Ovary (tissue), 10 donors: ENCODE measurements at regions of chr7 and their contacts with region 1.

Region 1: GRCh38 chr7:148962823-148963582 is 65.3 kb downstream of the PDIA4 start:
- DNase-seq: peak; percentile 63 to 75 (median 67)
- H3K4me3 ChIP-seq: peak overlapping the region; percentile 44
- H3K27ac ChIP-seq: peak overlapping the region; percentile 14 to 65
- H3K4me1 ChIP-seq: peaks cover 3% of the 10 kb centered on the region
- H3K27me3 ChIP-seq: no peaks in the 10 kb centered on the region
- CTCF ChIP-seq: peak; percentile 28 to 44 (median 34)
- EP300 ChIP-seq: no peak
- POLR2A ChIP-seq: no peak

Region 2: GRCh38 chr7:148503875-148504487 is 459.0 kb before region 1 on chr7:
- intact Hi-C with region 1: loop called (anchors 5 to 10 kb)
- DNase-seq: no peak
- H3K4me3 ChIP-seq: no peak overlapping the region
- H3K27ac ChIP-seq: no peak overlapping the region
- H3K4me1 ChIP-seq: no peaks in the 10 kb centered on the region
- H3K27me3 ChIP-seq: no peaks in the 10 kb centered on the region
- CTCF ChIP-seq: peak; percentile 42 to 70 (median 56)
- EP300 ChIP-seq: no peak
- POLR2A ChIP-seq: no peak

Region 3: DNA sequence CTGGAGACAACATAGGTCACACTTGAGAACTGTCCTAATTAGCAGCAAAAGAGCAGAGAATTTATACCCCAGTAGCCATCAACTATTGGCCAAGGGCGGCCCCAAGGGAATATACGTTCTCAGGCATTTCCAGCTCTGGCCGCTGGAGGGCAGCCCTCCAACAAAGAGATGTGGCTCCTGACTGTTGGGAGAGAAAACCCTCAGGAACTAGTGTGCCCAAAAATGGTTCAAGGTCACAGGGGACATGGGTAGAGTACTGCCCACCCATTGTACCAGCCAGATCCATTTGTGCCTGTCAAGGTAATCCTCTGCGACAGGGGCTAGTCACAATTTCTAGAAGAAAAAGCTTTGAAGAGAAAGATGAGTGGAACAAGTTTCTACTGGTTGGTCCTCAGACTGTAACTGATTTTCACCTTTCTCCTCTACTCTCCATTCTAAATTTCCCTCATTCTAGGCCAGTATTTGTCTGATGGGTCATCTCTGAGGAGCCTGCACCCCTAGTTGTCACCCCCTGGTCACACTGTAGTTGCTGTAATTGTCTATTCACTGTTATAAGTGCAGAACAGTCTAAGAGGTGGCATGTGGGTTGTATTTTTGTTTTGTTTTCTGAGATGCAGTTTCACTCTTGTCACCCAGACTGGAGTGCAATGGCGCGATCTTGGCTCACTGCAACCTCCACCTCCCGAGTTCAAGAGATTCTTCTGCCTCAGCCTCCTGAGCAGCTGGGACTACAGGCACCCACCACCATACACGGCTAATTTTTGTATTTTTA is 387.2 kb before region 1 on chr7:
- intact Hi-C with region 1: loop called in 2 of 4 experiments (anchors 5 to 10 kb)
- DNase-seq: peak; percentile 29 to 70 (median 42)
- H3K4me3 ChIP-seq: no peak overlapping the region
- H3K27ac ChIP-seq: no peak overlapping the region
- H3K4me1 ChIP-seq: no peaks in the 10 kb centered on the region
- H3K27me3 ChIP-seq: no peaks in the 10 kb centered on the region
- CTCF ChIP-seq: peak in 1 of 3 donors; percentile 46
- EP300 ChIP-seq: no peak
- POLR2A ChIP-seq: no peak

Region 4: DNA sequence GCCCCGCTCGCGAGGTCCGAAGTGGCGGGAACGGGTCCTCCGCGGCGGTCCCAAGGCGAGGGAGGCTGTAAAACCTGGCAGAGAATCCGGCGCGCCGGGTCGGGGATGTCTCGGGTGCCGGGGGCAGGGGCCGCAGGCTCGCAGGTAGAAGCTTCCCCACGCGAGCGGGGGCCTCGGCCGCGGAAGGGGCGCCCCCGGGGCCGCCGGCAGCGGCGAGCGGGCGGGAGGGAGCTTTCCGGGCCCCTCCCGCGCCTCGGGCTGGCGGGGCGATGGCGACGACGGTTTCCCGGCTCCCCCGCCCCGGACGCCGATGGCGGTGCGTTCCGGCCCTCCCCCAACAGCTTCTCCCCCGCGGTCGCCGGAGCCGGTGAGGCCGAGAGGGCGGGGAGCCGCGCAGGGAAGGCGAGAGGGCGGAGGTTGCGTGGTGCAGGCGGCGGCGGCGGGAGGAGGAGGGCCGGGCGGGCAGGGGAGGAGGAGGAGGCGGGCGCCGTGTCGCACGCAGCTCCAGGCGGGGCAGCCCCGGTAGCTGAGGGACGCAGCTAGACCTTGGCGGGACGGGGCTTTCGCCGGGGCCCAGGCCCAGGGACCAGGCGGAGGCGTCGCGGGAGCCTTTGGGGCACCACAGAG is 264.5 kb before region 1 on chr7 and contains the start of gene CUL1:
- intact Hi-C with region 1: loop called in 2 of 4 experiments (anchors 10 kb)
- DNase-seq: peak; percentile 80 to 86 (median 82)
- H3K4me3 ChIP-seq: peak within 1 kb of the TSS; percentile 73
- H3K27ac ChIP-seq: peak within 1 kb of the TSS; percentile 99 to 100
- H3K4me1 ChIP-seq: peaks cover 13% of the 10 kb centered on the region
- H3K27me3 ChIP-seq: no peaks in the 10 kb centered on the region
- CTCF ChIP-seq: no peak
- EP300 ChIP-seq: no peak
- POLR2A ChIP-seq: peak; percentile 54
- total RNA-seq, gene CUL1: 35.7 to 51.3 (median 40.2) TPM

Region 5: DNA sequence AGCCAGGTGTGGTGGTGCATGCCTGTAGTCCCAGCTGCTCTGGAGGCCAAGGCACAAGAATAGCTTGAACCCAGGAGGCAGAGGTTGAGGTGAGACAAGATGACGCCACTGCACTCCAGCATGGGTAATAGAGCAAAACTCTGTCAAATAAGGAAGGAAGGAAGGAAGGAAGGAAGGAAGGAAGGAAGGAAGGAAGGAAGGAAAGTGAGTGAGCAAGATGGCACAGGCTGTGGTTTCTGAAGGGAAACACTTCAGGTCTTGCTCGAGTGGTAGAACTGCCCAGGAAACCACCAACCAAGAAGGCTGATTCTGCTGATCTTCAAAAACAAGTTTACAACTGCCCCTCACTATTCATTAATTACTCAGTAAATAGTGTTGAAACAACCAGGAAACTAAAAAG is 124.1 kb before region 1 on chr7:
- intact Hi-C with region 1: no loop called
- DNase-seq: no peak
- H3K4me3 ChIP-seq: no peak overlapping the region
- H3K27ac ChIP-seq: no peak overlapping the region
- H3K4me1 ChIP-seq: no peaks in the 10 kb centered on the region
- H3K27me3 ChIP-seq: no peaks in the 10 kb centered on the region
- CTCF ChIP-seq: no peak
- EP300 ChIP-seq: no peak
- POLR2A ChIP-seq: no peak

Region 6: DNA sequence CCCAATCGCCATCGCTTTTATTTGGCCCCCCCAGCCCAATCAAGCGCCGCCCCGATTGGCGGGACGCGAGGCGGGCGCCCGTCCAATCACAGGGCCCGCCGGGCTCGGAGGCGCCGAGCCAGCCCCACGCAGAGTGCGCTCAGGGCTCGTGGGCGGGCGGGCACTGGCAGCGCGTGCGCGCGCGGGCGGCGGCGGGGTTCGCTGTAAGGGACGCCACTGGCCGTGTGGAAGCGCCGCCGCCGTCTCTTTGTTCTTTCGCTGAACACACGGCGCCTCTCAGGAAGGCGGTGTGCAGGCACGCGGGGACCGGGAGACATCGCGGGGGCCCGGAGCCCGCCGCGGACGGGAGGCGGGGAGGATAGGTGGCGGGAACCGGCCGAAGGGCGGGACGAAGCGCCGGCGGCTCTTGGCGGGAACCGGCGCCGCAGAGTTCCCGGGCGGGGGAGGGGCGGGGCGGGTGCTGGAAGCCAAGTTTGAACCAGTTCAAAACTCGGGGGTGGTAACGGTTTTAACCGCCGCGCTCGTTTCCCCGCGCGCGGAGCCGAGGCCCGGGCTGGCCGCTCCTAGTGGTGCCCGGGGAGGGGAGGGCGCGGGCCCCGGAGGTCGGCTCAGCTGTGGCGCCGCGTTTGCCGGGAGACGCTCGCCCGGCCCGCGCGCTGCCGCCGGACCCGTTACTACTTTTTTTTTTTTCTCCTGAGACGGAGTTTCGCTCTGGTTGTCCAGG is 78.5 kb before region 1 on chr7:
- intact Hi-C with region 1: loop called in 1 of 4 experiments (anchors 10 kb)
- DNase-seq: peak; percentile 90 to 97 (median 94)
- H3K4me3 ChIP-seq: peak overlapping the region; percentile 95
- H3K27ac ChIP-seq: peak overlapping the region; percentile 85 to 93
- H3K4me1 ChIP-seq: peaks cover 4% of the 10 kb centered on the region
- H3K27me3 ChIP-seq: no peaks in the 10 kb centered on the region
- CTCF ChIP-seq: no peak
- EP300 ChIP-seq: no peak
- POLR2A ChIP-seq: peak; percentile 90